ENCODE measurements at regions of chr12 and their contacts with region 1.

Region 1: GRCh38 chr12:112564162-112564784 is 145.5 kb downstream of the PTPN11 start:
- DNase-seq: no peak
- ATAC-seq: no peak
- H3K4me3 ChIP-seq: no peak overlapping the region
- H3K27ac ChIP-seq: no peak overlapping the region
- H3K4me1 ChIP-seq: no peaks in the 10 kb centered on the region
- H3K27me3 ChIP-seq: peaks cover 2% of the 10 kb centered on the region; the same call in 1 of the 2 replicates
- CTCF ChIP-seq: peak; percentile 48

Region 2: DNA sequence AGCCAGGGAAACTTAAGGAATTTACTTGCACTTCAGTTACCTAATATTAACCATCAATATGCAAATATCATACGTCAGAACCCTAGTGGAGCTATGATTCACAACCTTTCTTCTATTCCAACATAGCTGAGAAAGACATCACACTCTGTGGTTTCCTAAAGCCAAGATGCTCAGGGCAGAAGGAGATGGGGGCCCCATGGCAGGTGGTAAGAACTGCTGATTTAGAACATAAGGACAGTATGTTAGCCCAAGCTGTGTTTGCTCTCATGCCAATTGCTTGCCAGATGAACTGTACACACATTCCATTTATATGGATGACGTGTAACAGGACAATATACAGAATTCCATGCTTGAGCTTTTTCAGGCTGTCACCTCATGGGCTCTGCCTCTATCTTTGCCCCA is 216.7 kb before region 1 on chr12:
- CTCF ChIA-PET with region 1: no interaction called
- POLR2A ChIA-PET with region 1: no interaction called
- in situ Hi-C with region 1: no loop called
- intact Hi-C with region 1: no loop called
- DNase-seq: no peak
- ATAC-seq: no peak
- H3K4me3 ChIP-seq: no peak overlapping the region
- H3K27ac ChIP-seq: no peak overlapping the region
- H3K4me1 ChIP-seq: peaks cover 7% of the 10 kb centered on the region; the same call in 1 of the 2 replicates
- H3K27me3 ChIP-seq: no peaks in the 10 kb centered on the region
- CTCF ChIP-seq: no peak

Region 3: GRCh38 chr12:112479413-112479812 is 84.9 kb before region 1 on chr12:
- CTCF ChIA-PET with region 1: interaction called, 11 read pairs
- POLR2A ChIA-PET with region 1: no interaction called
- in situ Hi-C with region 1: no loop called
- intact Hi-C with region 1: no loop called
- DNase-seq: no peak
- ATAC-seq: no peak
- H3K4me3 ChIP-seq: no peak overlapping the region
- H3K27ac ChIP-seq: no peak overlapping the region
- H3K4me1 ChIP-seq: no peaks in the 10 kb centered on the region
- H3K27me3 ChIP-seq: no peaks in the 10 kb centered on the region
- CTCF ChIP-seq: no peak

Region 4: GRCh38 chr12:112543751-112544150 is 20.5 kb before region 1 on chr12:
- CTCF ChIA-PET with region 1: no interaction called
- POLR2A ChIA-PET with region 1: interaction called, 10 read pairs
- in situ Hi-C with region 1: no loop called
- intact Hi-C with region 1: no loop called
- DNase-seq: no peak
- ATAC-seq: no peak
- H3K4me3 ChIP-seq: no peak overlapping the region
- H3K27ac ChIP-seq: no peak overlapping the region
- H3K4me1 ChIP-seq: no peaks in the 10 kb centered on the region
- H3K27me3 ChIP-seq: no peaks in the 10 kb centered on the region
- CTCF ChIP-seq: no peak

Measured in Panc1 (cell line).